AG04449 (cell line): ENCODE measurements at regions of chr3 and their contacts with region 1.

Region 1: GRCh38 chr3:42652611-42653302 is 740 bp upstream of the ZBTB47 start:
- DNase-seq: peak; percentile 21
- H3K4me3 ChIP-seq: peak overlapping the region; percentile 78
- CTCF ChIP-seq: no peak

Region 2: DNA sequence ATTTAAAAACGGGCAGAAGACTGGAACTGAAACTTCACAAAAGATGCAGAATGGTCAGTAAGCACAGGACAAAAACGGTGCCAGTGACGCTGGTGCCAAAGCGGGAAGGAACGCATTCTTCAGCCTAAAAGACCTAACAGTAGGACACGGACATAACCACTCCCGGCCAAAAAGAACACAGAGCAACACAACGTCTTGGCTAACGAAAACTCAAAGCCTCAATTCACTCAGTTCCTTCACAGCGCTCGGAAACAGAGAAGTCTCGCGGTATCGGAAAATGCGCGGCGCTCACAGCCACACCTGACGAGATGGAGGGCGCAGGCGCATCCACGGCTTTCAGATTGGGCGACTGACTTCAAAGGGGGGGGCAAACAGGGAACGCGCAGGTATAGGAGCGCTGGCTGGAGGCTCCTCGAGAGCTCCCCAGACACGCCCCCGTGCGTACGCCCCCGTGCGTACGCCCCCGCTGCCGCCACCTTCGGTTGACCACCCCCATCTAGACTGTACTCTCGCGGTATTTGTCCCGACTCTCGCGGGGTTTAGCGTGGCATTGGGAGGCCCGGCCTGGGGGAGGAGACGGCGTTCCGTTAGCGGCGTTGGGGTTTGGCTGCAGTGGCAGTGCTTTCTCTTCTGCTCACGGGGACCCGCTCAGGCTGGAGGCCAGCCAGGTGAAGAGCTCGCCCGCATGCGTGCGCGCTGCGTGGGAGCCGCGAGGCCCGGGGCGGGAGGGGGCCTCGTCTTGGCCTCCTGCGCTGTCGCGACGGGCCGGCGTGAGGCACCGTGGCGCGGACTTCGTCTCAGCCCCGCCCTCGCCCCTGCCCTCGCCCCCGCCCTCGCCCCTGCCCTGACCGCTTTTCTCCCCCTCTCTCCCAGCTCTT is 52.4 kb before region 1 on chr3 and contains the start of gene NKTR:
- CTCF ChIA-PET with region 1: no interaction called
- POLR2A ChIA-PET with region 1: interaction called, 15 read pairs
- DNase-seq: peak; percentile 89
- H3K4me3 ChIP-seq: peak within 1 kb of the TSS; percentile 86
- CTCF ChIP-seq: peak; percentile 17

Region 3: DNA sequence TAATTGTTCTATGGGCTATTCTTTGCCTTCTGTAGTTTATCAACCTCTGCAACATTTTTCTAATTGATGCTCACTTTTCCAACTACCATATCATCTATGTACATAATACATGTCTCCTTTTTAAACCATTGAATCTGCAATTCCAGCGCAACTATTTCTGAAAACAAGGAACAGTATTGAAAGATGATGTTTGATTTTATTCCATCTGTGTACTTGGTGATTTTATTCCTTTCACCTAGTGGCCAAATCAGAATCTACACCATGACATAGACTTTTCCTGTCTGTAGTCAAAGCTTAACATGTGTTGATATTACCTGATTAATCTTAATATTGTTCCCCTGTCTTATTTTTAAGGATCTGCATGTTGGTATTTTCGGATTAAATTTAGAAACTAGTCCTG is 39.3 kb before region 1 on chr3:
- CTCF ChIA-PET with region 1: interaction called, 11 read pairs
- POLR2A ChIA-PET with region 1: no interaction called
- DNase-seq: no peak
- H3K4me3 ChIP-seq: no peak overlapping the region
- CTCF ChIP-seq: peak; percentile 24

Region 4: DNA sequence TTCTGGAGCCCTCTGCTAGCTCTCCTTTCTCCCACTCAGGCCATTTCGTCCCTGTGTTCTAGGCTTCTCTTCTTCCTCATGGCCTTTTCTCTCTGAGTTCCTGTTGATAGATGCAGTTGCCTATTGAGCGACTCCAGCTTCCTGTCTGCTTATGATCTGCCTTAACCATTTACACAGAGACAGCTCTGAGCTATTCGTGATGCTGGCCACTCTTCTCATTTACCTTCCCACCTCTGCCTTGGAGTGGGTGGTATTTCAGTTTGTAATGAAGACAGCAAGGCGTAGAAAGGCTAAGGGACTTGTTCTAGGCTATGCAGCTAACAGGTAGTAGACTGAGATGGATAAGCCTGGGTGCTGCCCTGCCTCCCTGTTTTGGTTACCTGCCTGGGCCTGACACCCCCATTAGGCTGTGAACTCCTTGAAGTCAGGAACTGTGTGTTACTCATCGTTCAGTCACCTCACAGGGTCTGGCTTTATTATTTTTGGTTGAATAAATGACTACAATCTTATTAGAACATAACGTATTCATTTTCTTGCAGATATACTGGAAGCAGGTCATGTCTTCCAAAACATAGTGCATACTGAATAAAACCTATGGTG is 11.9 kb before region 1 on chr3:
- CTCF ChIA-PET with region 1: interaction called, 16 read pairs
- POLR2A ChIA-PET with region 1: no interaction called
- DNase-seq: no peak
- H3K4me3 ChIP-seq: no peak overlapping the region
- CTCF ChIP-seq: no peak

Region 5: GRCh38 chr3:42746455-42747450 is 94.0 kb after region 1 on chr3:
- CTCF ChIA-PET with region 1: interaction called, 36 read pairs
- POLR2A ChIA-PET with region 1: interaction called, 3 read pairs
- DNase-seq: no peak
- H3K4me3 ChIP-seq: no peak overlapping the region
- CTCF ChIP-seq: no peak